Gastrocnemius medialis (tissue), 4 donors: ENCODE measurements at regions of chr18 and their contacts with region 1.

Region 1: DNA sequence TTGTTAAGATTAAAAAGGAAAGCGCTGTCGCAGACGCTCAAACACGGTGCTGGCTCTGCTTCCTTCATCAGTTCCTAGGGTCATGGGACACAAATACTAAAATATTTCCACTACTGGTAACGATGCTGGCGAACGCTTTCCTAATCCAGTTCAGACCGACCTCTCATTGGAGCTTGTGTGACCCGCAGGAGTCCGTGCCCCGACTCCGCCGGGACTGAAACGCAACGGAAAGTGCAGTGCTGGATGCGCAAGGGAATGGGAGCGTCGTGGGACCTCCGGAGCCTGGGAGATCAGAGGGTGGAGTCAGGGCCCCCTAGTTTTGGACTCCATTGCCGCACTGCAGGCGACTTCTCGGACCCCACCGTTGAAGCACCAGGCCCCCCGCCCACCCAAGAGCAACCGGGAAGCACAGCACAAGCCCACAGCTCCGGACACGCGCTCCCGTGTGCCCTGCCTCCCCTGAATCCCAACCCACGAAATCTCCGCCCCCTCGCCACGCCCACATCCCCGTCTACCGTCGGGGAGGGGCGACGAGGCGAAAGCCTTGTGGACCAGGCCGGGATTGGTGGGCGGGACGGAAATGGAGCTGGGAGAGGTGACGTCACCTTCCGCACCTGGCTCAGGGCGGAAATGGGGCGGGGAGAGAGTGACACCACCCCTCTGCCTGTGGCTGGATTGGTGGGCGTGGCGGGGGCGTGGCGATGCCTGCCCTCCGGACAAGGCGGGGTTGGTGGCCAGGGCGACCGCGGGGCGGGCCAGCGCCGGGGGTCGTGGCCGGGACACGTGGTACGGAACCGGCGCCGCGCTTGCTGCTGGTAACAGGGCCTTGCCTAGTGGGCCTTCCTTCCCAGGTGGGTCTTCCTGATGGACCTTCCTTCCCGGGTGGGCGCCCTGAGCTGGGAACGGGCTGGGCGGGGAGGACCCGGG is at the start of gene CNDP2:
- DNase-seq: peak; percentile 99
- ATAC-seq: peak; percentile 97 to 99
- H3K4me3 ChIP-seq: peak within 1 kb of the TSS; percentile 68 to 96 (median 82)
- H3K27ac ChIP-seq: peak within 1 kb of the TSS; percentile 78 to 90 (median 88)
- H3K4me1 ChIP-seq: peaks cover 9 to 13% of the 10 kb centered on the region in 2 donors
- H3K27me3 ChIP-seq: no peaks in the 10 kb centered on the region
- CTCF ChIP-seq: no peak
- POLR2A ChIP-seq: peak; percentile 70 to 77
- total RNA-seq, gene CNDP2: 29.5 to 82.8 (median 31.6) TPM

Region 2: DNA sequence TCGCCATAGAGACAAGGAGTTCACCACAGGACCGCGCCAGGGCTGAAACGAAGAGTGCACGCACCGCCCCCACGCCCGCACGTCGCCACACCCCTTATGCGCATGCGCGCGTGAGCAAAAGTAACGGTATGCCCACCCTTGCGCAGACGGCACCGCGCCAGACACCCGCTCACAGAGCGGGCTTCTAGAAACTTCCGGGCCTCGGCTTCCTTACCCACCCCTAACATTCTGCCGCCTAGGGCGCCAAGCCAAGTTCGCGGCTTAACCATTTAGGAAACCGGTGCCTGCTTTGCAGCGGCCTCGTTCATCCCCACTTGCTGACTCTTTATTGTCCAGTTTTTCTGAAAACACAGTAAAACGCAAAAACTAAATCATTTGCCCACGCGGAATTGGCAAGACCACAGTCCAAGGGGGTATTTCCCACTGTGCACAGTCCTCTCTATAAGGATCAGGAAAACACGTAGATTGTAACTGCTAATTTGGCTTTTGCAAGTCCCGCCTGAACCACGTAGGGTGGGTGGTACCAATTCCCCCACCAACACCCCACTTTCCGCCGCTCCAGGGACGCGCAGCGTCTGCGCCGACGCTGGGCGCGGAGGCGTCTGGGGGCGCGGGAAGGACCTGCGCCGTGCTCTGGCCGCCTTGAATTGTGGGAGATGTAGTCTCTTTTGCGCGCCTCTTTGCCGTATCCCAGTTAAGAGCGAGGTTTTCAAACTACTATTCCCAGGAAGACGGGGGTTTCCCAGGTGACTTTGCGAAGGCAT is 347.9 kb before region 1 on chr18 and contains the starts of genes FBXO15 and TIMM21:
- in situ Hi-C with region 1: no loop called
- intact Hi-C with region 1: loop called (anchors 1 kb)
- DNase-seq: peak; percentile 94 to 97
- ATAC-seq: peak; percentile 97 to 98
- H3K4me3 ChIP-seq: peak within 1 kb of the TSS; percentile 63 to 95 (median 81)
- H3K27ac ChIP-seq: peak within 1 kb of the TSS; percentile 89 to 94 (median 92)
- H3K4me1 ChIP-seq: peaks cover 30 to 45% of the 10 kb centered on the region in 2 donors
- H3K27me3 ChIP-seq: no peaks in the 10 kb centered on the region
- CTCF ChIP-seq: no peak
- POLR2A ChIP-seq: peak; percentile 79 to 85
- total RNA-seq, gene FBXO15: not detected
- total RNA-seq, gene TIMM21: 40.0 to 108 (median 75.8) TPM

Region 3: DNA sequence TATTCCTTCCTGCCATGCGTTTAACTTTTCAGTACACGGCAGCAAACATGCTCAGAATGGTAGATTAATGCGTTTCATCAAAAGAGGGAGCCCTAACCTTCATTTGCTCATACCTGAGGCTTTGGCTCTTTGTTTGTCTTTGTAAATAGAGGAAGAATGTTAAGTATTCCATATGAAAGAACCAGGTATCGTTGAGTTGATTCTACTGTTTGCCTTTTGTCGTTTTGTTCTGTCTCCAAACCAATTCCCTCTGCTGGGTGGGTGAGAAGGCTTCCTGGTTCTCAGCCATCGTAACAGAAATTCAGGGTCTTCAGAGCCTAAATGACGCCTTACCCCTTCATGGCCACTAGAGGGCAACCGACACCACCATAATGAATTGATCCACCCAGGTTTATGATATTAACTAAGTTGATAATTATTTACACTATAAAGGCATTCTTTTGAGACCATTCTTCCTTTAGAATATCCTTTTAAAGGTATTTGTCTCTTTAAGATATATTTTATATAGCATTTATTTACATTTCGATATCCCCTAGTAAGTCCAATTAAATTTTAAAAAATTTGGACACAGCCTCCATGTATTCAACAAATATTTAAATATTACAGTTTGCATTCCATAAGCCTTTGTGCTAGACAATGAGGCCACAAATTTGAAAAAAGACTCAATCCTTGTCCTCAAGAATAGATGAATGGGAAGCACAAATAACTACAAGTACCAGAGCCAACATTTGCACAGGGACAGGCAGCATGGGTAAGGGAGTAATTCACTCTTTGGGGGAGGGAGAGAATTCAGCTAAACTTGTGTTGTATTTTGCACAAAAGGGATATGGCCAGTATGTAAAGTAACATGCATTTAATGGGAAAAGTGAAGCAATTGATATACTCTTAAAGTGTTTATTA is 299.4 kb before region 1 on chr18:
- in situ Hi-C with region 1: loop called in 1 of 4 experiments (anchors 10 kb)
- intact Hi-C with region 1: loop called (anchors 5 kb)
- DNase-seq: no peak
- ATAC-seq: peak in 1 of 2 donors; percentile 61
- H3K4me3 ChIP-seq: peak overlapping the region in 1 of 4 donors; percentile 31
- H3K27ac ChIP-seq: no peak overlapping the region
- H3K4me1 ChIP-seq: no peaks in the 10 kb centered on the region
- H3K27me3 ChIP-seq: peaks cover 0 to 7% (median 3%) of the 10 kb centered on the region in 3 donors
- CTCF ChIP-seq: peak; percentile 79 to 89 (median 85)
- POLR2A ChIP-seq: no peak

Region 4: DNA sequence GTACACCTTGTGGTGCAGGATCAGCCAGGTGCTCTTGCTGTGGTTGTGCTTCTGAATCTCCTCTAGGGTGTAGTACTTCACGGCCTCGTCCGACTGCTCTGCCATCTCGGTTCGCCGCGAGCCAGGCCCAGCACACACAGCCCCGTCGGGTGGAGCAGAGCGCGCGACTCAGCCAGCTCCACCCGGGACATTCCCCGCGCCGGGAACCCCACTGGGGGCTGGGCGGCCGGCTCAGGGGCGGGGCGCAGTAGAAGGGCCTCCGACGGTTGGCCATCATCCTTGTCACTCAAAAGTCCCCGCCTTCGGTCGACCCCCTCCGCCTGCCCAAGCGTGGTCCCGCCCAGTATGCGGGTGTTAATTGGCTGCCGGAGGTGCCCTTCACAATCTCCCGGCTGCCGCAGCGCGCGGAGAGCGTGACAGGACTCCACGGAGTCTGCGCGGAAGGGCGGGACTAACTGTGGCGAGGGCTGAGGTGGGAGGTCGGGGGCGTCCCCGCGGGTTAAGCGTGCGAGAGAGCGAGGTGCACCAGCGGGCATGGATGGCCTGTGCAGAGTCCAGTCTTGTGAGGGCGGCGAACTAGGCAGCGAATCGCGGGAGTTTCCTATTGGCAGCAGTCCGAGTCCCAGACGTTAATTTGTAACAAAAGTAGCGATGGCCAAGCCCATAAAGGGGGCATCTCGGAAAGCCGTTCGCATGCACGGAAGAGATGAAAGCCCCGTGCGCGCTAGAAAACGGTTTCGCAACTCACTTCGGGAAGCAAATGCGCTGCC is 203.9 kb before region 1 on chr18 and contains the start of gene CYB5A:
- in situ Hi-C with region 1: no loop called
- intact Hi-C with region 1: loop called (anchors 1 kb)
- DNase-seq: peak; percentile 97 to 98
- ATAC-seq: peak; percentile 99 to 100
- H3K4me3 ChIP-seq: peak within 1 kb of the TSS; percentile 75 to 96 (median 94)
- H3K27ac ChIP-seq: peak within 1 kb of the TSS; percentile 57 to 83 (median 70)
- H3K4me1 ChIP-seq: peaks cover 2 to 10% of the 10 kb centered on the region in 2 donors
- H3K27me3 ChIP-seq: no peaks in the 10 kb centered on the region
- CTCF ChIP-seq: no peak
- POLR2A ChIP-seq: no peak
- total RNA-seq, gene CYB5A: 21.4 to 29.4 (median 23.4) TPM

Region 5: GRCh38 chr18:74353169-74353775 is 142.6 kb before region 1 on chr18:
- in situ Hi-C with region 1: loop called in 1 of 4 experiments (anchors 10 kb)
- intact Hi-C with region 1: loop called (anchors 5 kb)
- DNase-seq: peak; percentile 21 to 24
- ATAC-seq: peak in 1 of 2 donors; percentile 70
- H3K4me3 ChIP-seq: no peak overlapping the region
- H3K27ac ChIP-seq: no peak overlapping the region
- H3K4me1 ChIP-seq: no peaks in the 10 kb centered on the region
- H3K27me3 ChIP-seq: no peaks in the 10 kb centered on the region
- CTCF ChIP-seq: peak; percentile 12 to 60 (median 48)
- POLR2A ChIP-seq: no peak

Region 6: DNA sequence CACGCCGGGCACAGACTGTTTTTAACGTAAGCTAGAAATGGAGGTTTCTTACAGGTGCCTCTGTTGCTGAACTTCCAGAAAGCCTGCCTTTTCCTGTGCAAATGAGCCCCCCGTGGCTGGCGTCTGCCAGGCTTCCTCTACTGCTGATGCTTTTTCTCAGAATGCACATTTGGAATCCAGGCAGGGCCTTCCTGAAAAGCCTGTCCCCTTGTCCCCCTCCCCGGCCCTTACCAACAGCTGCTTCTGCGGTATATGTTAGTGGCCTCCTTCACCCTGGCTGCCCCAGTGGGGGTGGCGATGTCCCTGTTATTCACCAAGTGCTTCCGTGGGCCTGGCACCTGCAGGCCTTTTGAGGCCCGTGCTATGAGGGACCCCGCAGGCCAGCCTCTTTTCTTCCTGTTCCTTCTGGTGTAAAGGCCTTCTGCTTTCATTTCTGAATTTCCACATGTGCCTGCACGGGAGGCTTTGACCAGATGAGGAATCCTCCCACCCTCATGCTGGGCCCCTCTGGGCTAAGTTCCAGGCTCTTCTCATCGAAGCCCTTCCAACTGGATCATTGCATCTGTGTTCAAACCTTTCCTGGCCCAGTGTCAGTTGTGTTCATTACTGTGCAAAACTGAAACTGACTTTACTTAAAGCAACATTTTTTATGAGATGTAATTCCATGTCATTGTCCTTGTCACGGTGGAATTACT is 10.7 kb after region 1 on chr18:
- in situ Hi-C with region 1: no loop called
- intact Hi-C with region 1: no loop called
- DNase-seq: no peak
- ATAC-seq: no peak
- H3K4me3 ChIP-seq: no peak overlapping the region
- H3K27ac ChIP-seq: no peak overlapping the region
- H3K4me1 ChIP-seq: no peaks in the 10 kb centered on the region
- H3K27me3 ChIP-seq: no peaks in the 10 kb centered on the region
- CTCF ChIP-seq: no peak
- POLR2A ChIP-seq: no peak

Region 7: GRCh38 chr18:74551936-74552555 is 56.2 kb after region 1 on chr18:
- in situ Hi-C with region 1: no loop called
- intact Hi-C with region 1: loop called (anchors 5 kb)
- DNase-seq: peak; percentile 40 to 60
- ATAC-seq: peak; percentile 93 to 95
- H3K4me3 ChIP-seq: no peak overlapping the region
- H3K27ac ChIP-seq: no peak overlapping the region
- H3K4me1 ChIP-seq: peaks cover 0 to 6% of the 10 kb centered on the region in 2 donors
- H3K27me3 ChIP-seq: no peaks in the 10 kb centered on the region
- CTCF ChIP-seq: peak; percentile 48 to 79 (median 68)
- POLR2A ChIP-seq: no peak

Region 8: DNA sequence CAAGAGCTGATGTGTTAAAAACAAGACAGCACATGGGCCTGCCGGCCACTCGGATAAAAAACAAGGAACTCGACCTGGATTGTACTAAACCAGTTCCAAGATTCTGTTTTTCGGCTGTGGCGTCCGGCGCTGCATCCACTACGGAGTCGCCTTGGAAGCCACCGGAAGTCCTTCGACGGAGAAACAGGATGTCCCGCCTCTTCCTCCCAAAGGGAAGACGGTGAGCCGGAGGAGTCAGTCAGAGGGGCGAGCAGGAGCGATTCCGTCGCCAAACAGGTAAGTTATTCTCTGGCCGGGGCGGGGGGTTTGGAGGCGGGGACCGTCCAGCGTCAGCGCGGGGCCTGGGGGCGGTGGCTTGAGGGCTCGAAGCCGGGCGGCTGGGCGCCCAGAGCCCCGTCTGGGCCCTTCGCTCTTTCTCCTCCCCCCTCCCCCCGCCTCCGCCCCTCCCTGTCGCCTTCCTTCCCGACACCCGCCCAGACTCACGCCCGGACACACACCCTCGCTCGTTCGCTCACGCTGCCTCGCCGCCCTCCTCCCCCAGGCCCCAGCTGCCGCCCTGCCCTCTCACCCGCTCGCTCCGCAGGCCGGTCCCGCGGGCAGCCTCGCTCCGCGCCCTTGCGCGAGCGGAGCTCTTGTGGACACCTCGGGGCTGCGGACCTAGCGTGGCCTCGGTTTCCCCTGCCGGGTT is 102.0 kb after region 1 on chr18 and contains the start of gene ZNF407:
- in situ Hi-C with region 1: loop called in 1 of 4 experiments (anchors 5 kb)
- intact Hi-C with region 1: loop called (anchors 1 kb)
- DNase-seq: peak; percentile 80 to 81
- ATAC-seq: peak; percentile 93
- H3K4me3 ChIP-seq: peak within 1 kb of the TSS; percentile 81 to 97 (median 94)
- H3K27ac ChIP-seq: peak within 1 kb of the TSS; percentile 91 to 98 (median 94)
- H3K4me1 ChIP-seq: peaks cover 39 to 42% of the 10 kb centered on the region in 2 donors
- H3K27me3 ChIP-seq: no peaks in the 10 kb centered on the region
- CTCF ChIP-seq: peak in 1 of 5 experiments; percentile 37
- POLR2A ChIP-seq: peak in 1 of 2 donors; percentile 3
- total RNA-seq, gene ZNF407: 5.9 to 11.4 (median 9.2) TPM